Activated CD4-positive, alpha-beta memory T cell treated with anti-CD3 and anti-CD28 coated beads for 36 hours (primary cell): ENCODE measurements at regions of chr17 and their contacts with region 1.

Region 1: DNA sequence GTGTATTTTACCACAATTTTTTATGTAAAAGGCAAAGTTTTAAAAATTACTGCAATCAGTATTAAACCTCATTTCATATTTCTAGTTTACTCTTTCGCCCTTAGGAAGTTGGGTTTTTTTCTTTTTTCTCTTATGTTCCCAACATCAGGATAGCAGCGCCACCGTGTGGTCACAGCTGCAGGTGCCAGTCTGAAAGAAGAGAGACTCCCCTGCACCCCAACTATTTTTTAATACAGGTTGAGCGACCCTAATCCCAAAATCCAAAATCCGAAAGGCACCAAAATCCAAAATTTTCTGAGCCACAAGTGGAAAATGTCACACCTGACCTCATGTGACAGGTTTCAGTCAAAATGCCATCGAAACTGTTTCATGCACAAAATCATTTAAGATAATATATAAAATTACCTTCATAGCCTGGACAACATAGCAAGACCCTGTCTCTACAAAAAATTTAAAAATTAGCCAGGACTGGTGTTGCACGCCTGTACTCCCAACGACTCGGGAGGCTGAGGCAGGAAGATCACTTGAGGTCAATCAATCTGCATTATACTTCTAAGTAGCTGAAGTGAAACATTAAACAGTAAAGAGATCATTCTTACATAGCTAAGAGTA is 21.8 kb upstream of the ASGR2 start:
- DNase-seq: peak; percentile 82
- H3K4me3 Mint-ChIP-seq: no peak overlapping the region
- H3K27ac Mint-ChIP-seq: no peak overlapping the region
- H3K4me1 Mint-ChIP-seq: peaks cover 17% of the 10 kb centered on the region
- H3K27me3 Mint-ChIP-seq: peaks cover 9% of the 10 kb centered on the region

Region 2: DNA sequence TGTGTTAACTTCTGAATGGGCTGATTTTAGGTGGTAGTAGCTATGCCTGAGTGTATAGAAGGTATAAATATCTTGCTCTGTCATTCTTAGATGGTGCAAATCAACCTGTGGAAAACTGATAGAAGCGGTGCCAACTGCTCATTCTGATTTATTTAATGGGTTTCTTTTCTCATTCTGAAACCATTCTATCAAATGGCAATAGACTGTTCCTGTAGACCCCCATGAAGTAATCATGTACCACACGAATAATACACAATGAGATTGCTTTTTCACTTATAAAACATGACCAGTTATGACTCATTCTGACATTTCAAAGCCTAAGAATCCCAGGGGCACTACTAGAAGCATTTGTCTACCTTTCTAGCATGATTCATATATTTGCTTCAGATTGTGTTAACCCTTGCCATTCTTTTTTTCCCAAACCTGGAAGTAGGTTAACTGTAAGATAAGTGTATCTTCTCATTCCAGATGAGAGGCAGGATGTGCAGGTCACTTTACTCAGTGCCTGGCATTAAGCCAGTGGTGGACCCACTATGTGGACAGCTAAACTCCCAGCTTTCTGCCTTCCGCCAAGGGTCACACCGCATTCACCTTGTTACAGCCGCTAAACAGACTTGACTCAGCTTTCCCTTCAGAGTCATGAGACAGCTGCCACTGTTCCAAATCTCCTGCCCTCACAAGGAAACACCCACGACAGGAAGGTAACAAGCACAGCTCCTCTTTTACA is 76.0 kb before region 1 on chr17:
- CTCF ChIA-PET with region 1: interaction called, 509 read pairs
- POLR2A ChIA-PET with region 1: interaction called, 13 read pairs
- intact Hi-C with region 1: loop called (anchors 1 kb)
- DNase-seq: peak; percentile 75
- H3K4me3 Mint-ChIP-seq: no peak overlapping the region
- H3K27ac Mint-ChIP-seq: peak overlapping the region; percentile 91
- H3K4me1 Mint-ChIP-seq: peaks cover 24% of the 10 kb centered on the region
- H3K27me3 Mint-ChIP-seq: peaks cover 14% of the 10 kb centered on the region

Region 3: DNA sequence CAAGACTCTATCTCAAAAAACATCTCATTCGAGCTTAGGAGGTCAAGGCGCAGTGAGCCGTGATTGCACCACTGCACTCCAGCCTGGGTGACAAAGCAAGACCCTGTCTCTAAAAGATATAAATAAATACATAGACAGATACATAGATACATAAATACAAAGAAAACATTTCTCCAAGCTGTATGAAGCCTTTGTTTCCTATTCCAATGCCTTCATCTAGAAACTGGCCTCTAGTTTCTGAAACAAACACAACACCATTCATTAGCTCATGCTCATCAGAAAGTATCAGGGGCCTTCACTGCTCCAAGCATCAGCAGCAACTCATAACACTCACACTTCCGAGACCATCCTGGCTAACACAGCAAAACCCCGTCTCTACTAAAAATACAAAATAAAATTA is 11.4 kb before region 1 on chr17:
- CTCF ChIA-PET with region 1: interaction called, 10 read pairs
- POLR2A ChIA-PET with region 1: no interaction called
- intact Hi-C with region 1: no loop called
- DNase-seq: no peak
- H3K4me3 Mint-ChIP-seq: no peak overlapping the region
- H3K27ac Mint-ChIP-seq: no peak overlapping the region
- H3K4me1 Mint-ChIP-seq: peaks cover 2% of the 10 kb centered on the region
- H3K27me3 Mint-ChIP-seq: peaks cover 12% of the 10 kb centered on the region

Region 4: GRCh38 chr17:7177196-7177953 is 41.0 kb after region 1 on chr17:
- CTCF ChIA-PET with region 1: interaction called, 16 read pairs
- POLR2A ChIA-PET with region 1: interaction called, 3 read pairs
- intact Hi-C with region 1: loop called (anchors 1 kb)
- DNase-seq: peak; percentile 76
- H3K4me3 Mint-ChIP-seq: peak overlapping the region; percentile 58
- H3K27ac Mint-ChIP-seq: no peak overlapping the region
- H3K4me1 Mint-ChIP-seq: peaks cover 11% of the 10 kb centered on the region
- H3K27me3 Mint-ChIP-seq: peaks cover 12% of the 10 kb centered on the region